Natural killer cell (primary cell): ENCODE measurements at regions of chr11 and their contacts with region 1.

Region 1: GRCh38 chr11:65588199-65589054 is 7.2 kb downstream of the KCNK7 start:
- DNase-seq: peak; percentile 65 to 90
- ATAC-seq: peak; percentile 82 to 86 (median 84)
- H3K4me3 ChIP-seq: no peak overlapping the region
- H3K4me3 Mint-ChIP-seq: peak overlapping the region; percentile 2
- H3K27ac ChIP-seq: peak overlapping the region; percentile 83
- H3K27ac Mint-ChIP-seq: peak overlapping the region; percentile 86 to 93
- H3K4me1 ChIP-seq: peaks cover 40% of the 10 kb centered on the region
- H3K4me1 Mint-ChIP-seq: peaks cover 17 to 36% of the 10 kb centered on the region in 2 donors
- H3K27me3 ChIP-seq: no peaks in the 10 kb centered on the region
- H3K27me3 Mint-ChIP-seq: no peaks in the 10 kb centered on the region
- CTCF ChIP-seq: peak; percentile 65

Region 2: DNA sequence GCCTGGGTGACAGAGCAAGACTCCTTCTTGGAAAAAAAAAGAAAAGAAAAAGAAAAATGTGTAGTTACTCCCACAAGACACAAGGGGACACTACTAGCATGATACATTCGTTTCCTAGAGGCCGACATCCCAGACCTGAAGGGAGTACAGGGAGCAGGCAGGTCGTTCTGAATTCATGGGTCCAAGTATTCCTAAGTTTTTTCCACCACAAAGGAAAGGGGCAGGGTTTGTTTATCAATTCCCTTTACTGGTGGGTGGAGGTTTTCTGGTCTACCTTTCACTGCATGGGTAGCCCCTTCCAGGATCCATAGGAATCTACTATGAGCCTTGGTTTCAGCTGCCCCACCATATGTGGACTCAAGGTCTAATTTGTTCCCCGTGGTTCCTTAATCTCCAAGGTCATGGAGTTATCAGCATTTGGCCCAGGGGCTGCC is 222.1 kb before region 1 on chr11:
- intact Hi-C with region 1: loop called (anchors 10 kb)
- DNase-seq: peak in 1 of 2 donors; percentile 80
- ATAC-seq: peak; percentile 76 to 81 (median 81)
- H3K4me3 ChIP-seq: no peak overlapping the region
- H3K4me3 Mint-ChIP-seq: no peak overlapping the region
- H3K27ac ChIP-seq: no peak overlapping the region
- H3K27ac Mint-ChIP-seq: no peak overlapping the region
- H3K4me1 ChIP-seq: peaks cover 15% of the 10 kb centered on the region
- H3K4me1 Mint-ChIP-seq: peaks cover 5 to 13% of the 10 kb centered on the region in 2 donors
- H3K27me3 ChIP-seq: no peaks in the 10 kb centered on the region
- H3K27me3 Mint-ChIP-seq: no peaks in the 10 kb centered on the region
- CTCF ChIP-seq: peak; percentile 70

Region 3: GRCh38 chr11:65540297-65541092 is 47.9 kb before region 1 on chr11:
- intact Hi-C with region 1: loop called (anchors 1 kb)
- DNase-seq: peak; percentile 88 to 93
- ATAC-seq: peak; percentile 88 to 96 (median 90)
- H3K4me3 ChIP-seq: peak overlapping the region; percentile 71
- H3K4me3 Mint-ChIP-seq: peak overlapping the region; percentile 88
- H3K27ac ChIP-seq: peak overlapping the region; percentile 70
- H3K27ac Mint-ChIP-seq: peak overlapping the region; percentile 39 to 76
- H3K4me1 ChIP-seq: peaks cover 17% of the 10 kb centered on the region
- H3K4me1 Mint-ChIP-seq: peaks cover 7 to 40% of the 10 kb centered on the region in 2 donors
- H3K27me3 ChIP-seq: no peaks in the 10 kb centered on the region
- H3K27me3 Mint-ChIP-seq: no peaks in the 10 kb centered on the region
- CTCF ChIP-seq: peak; percentile 52

Region 4: DNA sequence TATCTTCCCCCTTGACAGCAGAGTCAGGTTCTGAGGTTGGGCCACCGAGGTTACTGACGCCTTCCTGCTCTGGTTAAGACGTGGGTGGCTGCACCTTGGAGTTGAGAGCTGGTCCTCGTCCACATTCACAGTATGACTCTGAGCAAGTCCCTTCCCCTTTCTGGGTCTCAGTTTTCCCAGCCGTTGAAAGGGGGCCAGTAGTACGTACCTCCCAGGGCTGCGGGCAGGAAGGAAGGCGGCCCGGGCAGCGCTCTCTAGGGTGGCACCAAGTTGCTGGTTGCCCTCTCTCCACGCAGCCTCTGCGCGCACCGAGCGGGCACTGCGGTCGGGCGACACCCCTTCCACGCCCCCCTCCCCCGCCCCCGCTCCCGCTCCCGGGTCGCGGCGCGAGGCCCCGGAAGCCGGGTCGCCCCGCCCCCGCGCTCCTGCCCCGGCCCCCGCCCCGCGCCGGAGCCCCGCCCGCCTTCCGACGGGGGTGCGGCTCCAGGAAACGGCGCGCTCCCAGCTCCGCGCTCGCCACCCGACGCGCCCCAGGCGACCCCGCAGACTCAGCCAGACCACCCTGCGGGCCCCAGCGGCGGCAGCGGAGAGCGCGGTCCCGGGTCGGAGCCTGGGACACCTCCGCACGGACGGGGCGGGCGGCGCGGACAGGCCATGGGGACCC is 12.7 kb before region 1 on chr11 and contains the start of gene EHBP1L1:
- intact Hi-C with region 1: loop called (anchors 1 kb)
- DNase-seq: peak; percentile 62 to 87
- ATAC-seq: peak; percentile 23 to 41 (median 27)
- H3K4me3 ChIP-seq: peak within 1 kb of the TSS; percentile 68
- H3K4me3 Mint-ChIP-seq: peak within 1 kb of the TSS; percentile 91
- H3K27ac ChIP-seq: peak within 1 kb of the TSS; percentile 83
- H3K27ac Mint-ChIP-seq: peak within 1 kb of the TSS; percentile 97 to 99
- H3K4me1 ChIP-seq: peaks cover 64% of the 10 kb centered on the region
- H3K4me1 Mint-ChIP-seq: peaks cover 50 to 76% of the 10 kb centered on the region in 2 donors
- H3K27me3 ChIP-seq: no peaks in the 10 kb centered on the region
- H3K27me3 Mint-ChIP-seq: no peaks in the 10 kb centered on the region
- CTCF ChIP-seq: no peak
- total RNA-seq, gene EHBP1L1: 129 to 137 (median 135) TPM

Region 5: GRCh38 chr11:65695456-65696241 is 107.2 kb after region 1 on chr11:
- intact Hi-C with region 1: no loop called
- DNase-seq: no peak
- ATAC-seq: peak in 1 of 3 donors; percentile 30
- H3K4me3 ChIP-seq: no peak overlapping the region
- H3K4me3 Mint-ChIP-seq: peak overlapping the region; percentile 13
- H3K27ac ChIP-seq: peak overlapping the region; percentile 58
- H3K27ac Mint-ChIP-seq: peak overlapping the region; percentile 60 to 84
- H3K4me1 ChIP-seq: peaks cover 19% of the 10 kb centered on the region
- H3K4me1 Mint-ChIP-seq: peaks cover 17 to 22% of the 10 kb centered on the region in 2 donors
- H3K27me3 ChIP-seq: no peaks in the 10 kb centered on the region
- H3K27me3 Mint-ChIP-seq: no peaks in the 10 kb centered on the region
- CTCF ChIP-seq: no peak